CD8-positive, alpha-beta T cell (primary cell): ENCODE measurements at regions of chr4 and their contacts with region 1.

Region 1: DNA sequence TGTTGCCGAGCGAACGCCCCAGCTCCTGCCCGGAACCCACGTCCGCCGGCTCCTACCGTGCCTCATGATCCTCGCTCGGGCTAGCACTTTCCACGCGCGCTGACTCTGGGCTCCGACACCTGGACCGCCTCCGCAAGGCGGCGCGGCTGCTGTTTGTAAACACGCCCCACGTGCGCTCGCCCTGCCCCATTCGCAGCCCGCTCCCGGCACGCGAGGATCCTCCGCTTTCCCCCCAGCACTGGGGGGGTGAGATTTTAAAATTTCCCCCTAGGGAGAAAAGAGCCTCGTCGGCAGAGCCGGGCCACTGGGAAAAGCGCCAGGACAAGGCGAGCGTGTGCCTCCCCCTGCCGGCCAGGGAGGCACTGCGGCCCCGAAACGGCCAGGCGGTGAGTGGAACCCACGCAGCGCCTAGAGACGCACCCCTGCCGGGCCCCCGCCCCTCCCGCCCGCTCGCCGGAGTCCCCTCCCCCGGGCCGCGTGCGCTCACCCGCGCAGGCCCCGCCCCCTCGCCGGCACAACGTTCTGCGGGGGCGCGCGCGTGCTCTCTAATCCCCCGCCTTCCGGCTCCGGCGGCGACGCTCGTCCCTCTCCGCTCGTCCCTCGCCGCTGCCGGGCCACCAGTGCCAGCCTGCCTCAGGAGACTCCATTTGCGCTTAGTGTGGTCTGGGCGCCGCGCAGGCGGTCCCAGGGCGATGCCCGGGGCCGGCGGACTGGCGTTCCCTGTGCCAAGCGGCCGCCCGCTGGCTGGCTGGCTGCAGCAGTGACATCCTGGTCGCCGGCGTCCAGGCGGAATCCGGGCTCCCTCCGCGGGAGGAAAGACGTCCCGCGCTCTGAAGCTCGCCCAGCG is at the start of gene TIGD2:
- DNase-seq: peak; percentile 78 to 96 (median 88)
- ATAC-seq: peak; percentile 94
- H3K4me3 ChIP-seq: peak within 1 kb of the TSS; percentile 75 to 80
- H3K4me3 Mint-ChIP-seq: peak within 1 kb of the TSS; percentile 89
- H3K27ac ChIP-seq: peak within 1 kb of the TSS; percentile 63 to 66
- H3K27ac Mint-ChIP-seq: peak within 1 kb of the TSS; percentile 79
- H3K4me1 ChIP-seq: peaks cover 16% of the 10 kb centered on the region
- H3K4me1 Mint-ChIP-seq: peaks cover 24% of the 10 kb centered on the region
- H3K27me3 ChIP-seq: no peaks in the 10 kb centered on the region
- H3K27me3 Mint-ChIP-seq: no peaks in the 10 kb centered on the region
- CTCF ChIP-seq: peak; percentile 68
- total RNA-seq, gene TIGD2: 2.4 to 2.9 TPM

Region 2: GRCh38 chr4:88378691-88379559 is 732.3 kb before region 1 on chr4 and contains the start of gene HERC6:
- CTCF ChIA-PET with region 1: no interaction called
- POLR2A ChIA-PET with region 1: no interaction called
- intact Hi-C with region 1: loop called (anchors 2 to 5 kb)
- DNase-seq: peak; percentile 39 to 93 (median 73)
- ATAC-seq: peak; percentile 63
- H3K4me3 ChIP-seq: peak within 1 kb of the TSS; percentile 82 to 98
- H3K4me3 Mint-ChIP-seq: peak within 1 kb of the TSS; percentile 96
- H3K27ac ChIP-seq: peak within 1 kb of the TSS; percentile 88 to 91
- H3K27ac Mint-ChIP-seq: peak within 1 kb of the TSS; percentile 95
- H3K4me1 ChIP-seq: peaks cover 31% of the 10 kb centered on the region
- H3K4me1 Mint-ChIP-seq: peaks cover 43% of the 10 kb centered on the region
- H3K27me3 ChIP-seq: no peaks in the 10 kb centered on the region
- H3K27me3 Mint-ChIP-seq: no peaks in the 10 kb centered on the region
- CTCF ChIP-seq: peak; percentile 57
- total RNA-seq, gene HERC6: 8.2 TPM

Region 3: DNA sequence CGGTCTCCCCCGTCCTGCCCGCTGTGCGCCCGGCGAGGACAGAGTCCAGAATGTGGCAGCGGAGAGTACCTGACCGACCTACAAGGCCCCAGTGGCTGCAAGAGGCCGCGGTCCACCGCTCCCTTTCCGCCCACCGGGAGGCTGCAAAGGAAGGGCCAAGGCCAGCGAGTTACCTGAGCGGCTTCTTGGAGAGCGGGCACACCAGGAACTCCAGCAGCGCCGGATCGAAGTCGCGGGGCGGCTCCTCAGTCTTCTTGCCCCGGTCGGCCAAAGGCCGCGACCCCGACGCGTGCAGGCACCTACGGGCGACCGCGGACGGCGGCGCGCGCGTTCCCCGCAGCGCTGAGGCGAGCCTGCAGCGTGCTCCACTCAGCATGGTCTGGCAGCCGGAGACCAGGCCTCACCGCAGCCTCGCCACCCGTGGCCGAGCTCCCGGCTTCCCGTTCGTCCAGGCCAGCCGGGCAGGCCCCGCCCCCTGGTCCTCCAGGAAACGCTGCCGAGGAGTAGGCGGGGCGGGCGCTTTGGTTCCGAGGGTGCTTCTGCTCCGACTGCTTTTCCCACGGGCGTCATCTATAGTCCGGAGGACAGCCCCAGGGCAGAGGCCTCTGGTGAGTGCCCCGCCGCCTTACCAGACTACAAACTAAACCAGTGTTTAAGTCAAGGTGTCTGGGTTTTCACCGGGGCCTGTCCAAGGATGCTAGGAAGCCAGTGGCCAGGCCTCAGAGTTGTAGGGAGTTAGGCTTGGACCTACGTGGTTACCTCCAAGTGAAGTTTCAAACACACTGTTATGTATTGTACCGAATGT is 587.7 kb before region 1 on chr4 and contains the start of gene PYURF:
- CTCF ChIA-PET with region 1: no interaction called
- POLR2A ChIA-PET with region 1: no interaction called
- intact Hi-C with region 1: loop called (anchors 5 to 10 kb)
- DNase-seq: peak; percentile 31 to 87 (median 75)
- ATAC-seq: peak; percentile 76
- H3K4me3 ChIP-seq: peak within 1 kb of the TSS; percentile 78 to 90
- H3K4me3 Mint-ChIP-seq: peak within 1 kb of the TSS; percentile 93
- H3K27ac ChIP-seq: peak within 1 kb of the TSS; percentile 54 to 76
- H3K27ac Mint-ChIP-seq: peak within 1 kb of the TSS; percentile 94
- H3K4me1 ChIP-seq: peaks cover 16% of the 10 kb centered on the region
- H3K4me1 Mint-ChIP-seq: peaks cover 43% of the 10 kb centered on the region
- H3K27me3 ChIP-seq: no peaks in the 10 kb centered on the region
- H3K27me3 Mint-ChIP-seq: no peaks in the 10 kb centered on the region
- CTCF ChIP-seq: no peak
- total RNA-seq, gene PYURF: 25.5 to 27.6 TPM

Region 4: DNA sequence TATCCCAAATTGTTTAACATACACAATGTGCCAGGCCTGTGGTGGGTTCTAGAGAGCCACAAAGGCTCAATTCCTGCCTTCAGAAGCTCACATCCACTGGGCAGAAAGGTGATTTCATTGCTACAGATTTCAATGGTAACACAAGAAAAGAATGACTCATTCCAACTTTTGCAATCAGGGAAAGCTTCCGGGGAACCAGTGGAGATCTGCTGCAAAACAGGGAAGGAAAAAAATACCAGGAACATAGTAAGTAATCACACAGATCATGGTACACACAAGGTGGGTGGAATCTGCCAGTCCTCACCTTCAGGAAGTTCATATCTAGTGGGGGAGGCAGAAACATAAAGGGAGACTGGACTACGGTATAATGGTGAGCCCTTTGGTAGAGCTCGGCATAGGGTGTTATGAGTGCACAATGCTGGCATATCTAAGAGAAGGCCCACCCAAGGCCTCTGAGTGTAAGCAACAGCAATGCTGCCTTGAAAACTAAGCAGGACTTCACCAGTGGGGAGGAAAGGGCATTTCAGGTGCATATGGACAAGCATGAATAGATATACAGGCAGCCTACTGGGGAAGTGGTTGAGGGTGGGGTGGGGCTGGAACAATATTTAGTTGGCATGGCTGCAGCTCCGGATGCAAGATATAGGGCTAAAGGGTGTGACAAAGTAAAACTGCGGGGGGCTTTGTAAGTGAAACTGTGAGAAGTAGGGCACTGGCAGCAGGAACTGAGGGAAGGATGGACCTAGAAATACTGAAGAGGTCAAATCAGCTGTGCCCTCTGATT is 172.2 kb after region 1 on chr4:
- CTCF ChIA-PET with region 1: no interaction called
- POLR2A ChIA-PET with region 1: no interaction called
- intact Hi-C with region 1: loop called in 1 of 2 experiments (anchors 10 kb)
- DNase-seq: peak in 8 of 9 experiments; percentile 34 to 86 (median 59)
- ATAC-seq: peak; percentile 80
- H3K4me3 ChIP-seq: peak overlapping the region in 1 of 2 experiments; percentile 36
- H3K4me3 Mint-ChIP-seq: peak overlapping the region; percentile 68
- H3K27ac ChIP-seq: peak overlapping the region; percentile 69 to 94
- H3K27ac Mint-ChIP-seq: peak overlapping the region; percentile 93
- H3K4me1 ChIP-seq: peaks cover 45% of the 10 kb centered on the region
- H3K4me1 Mint-ChIP-seq: peaks cover 67% of the 10 kb centered on the region
- H3K27me3 ChIP-seq: no peaks in the 10 kb centered on the region
- H3K27me3 Mint-ChIP-seq: no peaks in the 10 kb centered on the region
- CTCF ChIP-seq: no peak

Region 5: DNA sequence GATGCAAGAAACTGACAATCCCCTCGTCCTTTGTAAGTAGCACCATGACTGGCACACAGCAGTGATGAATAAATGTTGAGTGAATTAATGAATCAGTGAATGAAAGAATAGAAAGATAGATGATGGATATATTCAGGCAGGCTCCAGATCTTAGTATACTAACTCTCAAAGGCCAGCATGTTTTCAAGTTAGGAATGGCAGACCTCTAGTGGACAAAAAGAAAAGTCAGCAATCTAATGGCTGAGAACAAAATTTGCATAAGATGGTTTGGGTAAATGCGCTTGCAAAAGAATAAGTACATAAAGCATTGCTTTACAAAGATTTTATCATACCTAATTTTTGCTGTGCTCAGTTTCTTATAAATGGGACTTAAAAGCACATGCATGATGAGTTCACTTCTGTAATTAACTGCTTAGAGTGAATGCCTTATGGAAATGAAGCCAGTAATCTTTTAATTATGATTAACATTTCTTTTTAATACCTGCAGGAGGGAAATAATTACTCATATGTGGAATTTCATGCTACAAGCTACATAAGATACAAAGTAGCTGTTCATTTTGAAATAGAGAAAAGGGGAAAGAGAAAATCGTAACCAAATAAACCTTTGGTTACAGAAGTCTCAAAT is 323.3 kb after region 1 on chr4:
- CTCF ChIA-PET with region 1: no interaction called
- POLR2A ChIA-PET with region 1: no interaction called
- intact Hi-C with region 1: loop called in 1 of 2 experiments (anchors 5 kb)
- DNase-seq: peak in 2 of 9 experiments; percentile 57 to 70
- ATAC-seq: peak; percentile 67
- H3K4me3 ChIP-seq: no peak overlapping the region
- H3K4me3 Mint-ChIP-seq: no peak overlapping the region
- H3K27ac ChIP-seq: no peak overlapping the region
- H3K27ac Mint-ChIP-seq: no peak overlapping the region
- H3K4me1 ChIP-seq: peaks cover 6% of the 10 kb centered on the region
- H3K4me1 Mint-ChIP-seq: peaks cover 7% of the 10 kb centered on the region
- H3K27me3 ChIP-seq: no peaks in the 10 kb centered on the region
- H3K27me3 Mint-ChIP-seq: peaks cover 4% of the 10 kb centered on the region
- CTCF ChIP-seq: peak; percentile 78

Region 6: GRCh38 chr4:89549907-89550306 is 438.7 kb after region 1 on chr4:
- CTCF ChIA-PET with region 1: no interaction called
- POLR2A ChIA-PET with region 1: no interaction called
- intact Hi-C with region 1: no loop called
- DNase-seq: no peak
- ATAC-seq: no peak
- H3K4me3 ChIP-seq: no peak overlapping the region
- H3K4me3 Mint-ChIP-seq: no peak overlapping the region
- H3K27ac ChIP-seq: no peak overlapping the region
- H3K27ac Mint-ChIP-seq: no peak overlapping the region
- H3K4me1 ChIP-seq: no peaks in the 10 kb centered on the region
- H3K4me1 Mint-ChIP-seq: no peaks in the 10 kb centered on the region
- H3K27me3 ChIP-seq: no peaks in the 10 kb centered on the region
- H3K27me3 Mint-ChIP-seq: peaks cover 2% of the 10 kb centered on the region
- CTCF ChIP-seq: no peak

Region 7: GRCh38 chr4:89619206-89619962 is 508.2 kb after region 1 on chr4:
- CTCF ChIA-PET with region 1: no interaction called
- POLR2A ChIA-PET with region 1: no interaction called
- intact Hi-C with region 1: no loop called
- DNase-seq: no peak
- ATAC-seq: no peak
- H3K4me3 ChIP-seq: no peak overlapping the region
- H3K4me3 Mint-ChIP-seq: no peak overlapping the region
- H3K27ac ChIP-seq: no peak overlapping the region
- H3K27ac Mint-ChIP-seq: no peak overlapping the region
- H3K4me1 ChIP-seq: peaks cover 8% of the 10 kb centered on the region
- H3K4me1 Mint-ChIP-seq: peaks cover 13% of the 10 kb centered on the region
- H3K27me3 ChIP-seq: no peaks in the 10 kb centered on the region
- H3K27me3 Mint-ChIP-seq: no peaks in the 10 kb centered on the region
- CTCF ChIP-seq: no peak

Region 8: GRCh38 chr4:89868999-89869589 is 757.9 kb after region 1 on chr4:
- CTCF ChIA-PET with region 1: no interaction called
- POLR2A ChIA-PET with region 1: no interaction called
- intact Hi-C with region 1: no loop called
- DNase-seq: no peak
- ATAC-seq: no peak
- H3K4me3 ChIP-seq: no peak overlapping the region
- H3K4me3 Mint-ChIP-seq: no peak overlapping the region
- H3K27ac ChIP-seq: no peak overlapping the region
- H3K27ac Mint-ChIP-seq: no peak overlapping the region
- H3K4me1 ChIP-seq: no peaks in the 10 kb centered on the region
- H3K4me1 Mint-ChIP-seq: no peaks in the 10 kb centered on the region
- H3K27me3 ChIP-seq: no peaks in the 10 kb centered on the region
- H3K27me3 Mint-ChIP-seq: peaks cover 4% of the 10 kb centered on the region
- CTCF ChIP-seq: peak; percentile 59